MCF 10A (cell line): ENCODE measurements at regions of chr15 and their contacts with region 1.

Region 1: GRCh38 chr15:59247364-59247763 is 40.7 kb downstream of the LDHAL6B start:
- DNase-seq: peak; percentile 77
- H3K4me3 Mint-ChIP-seq: no peak overlapping the region
- H3K27ac Mint-ChIP-seq: no peak overlapping the region
- H3K4me1 Mint-ChIP-seq: peaks cover 5% of the 10 kb centered on the region
- H3K27me3 Mint-ChIP-seq: no peaks in the 10 kb centered on the region
- CTCF ChIP-seq: peak; percentile 57

Region 2: DNA sequence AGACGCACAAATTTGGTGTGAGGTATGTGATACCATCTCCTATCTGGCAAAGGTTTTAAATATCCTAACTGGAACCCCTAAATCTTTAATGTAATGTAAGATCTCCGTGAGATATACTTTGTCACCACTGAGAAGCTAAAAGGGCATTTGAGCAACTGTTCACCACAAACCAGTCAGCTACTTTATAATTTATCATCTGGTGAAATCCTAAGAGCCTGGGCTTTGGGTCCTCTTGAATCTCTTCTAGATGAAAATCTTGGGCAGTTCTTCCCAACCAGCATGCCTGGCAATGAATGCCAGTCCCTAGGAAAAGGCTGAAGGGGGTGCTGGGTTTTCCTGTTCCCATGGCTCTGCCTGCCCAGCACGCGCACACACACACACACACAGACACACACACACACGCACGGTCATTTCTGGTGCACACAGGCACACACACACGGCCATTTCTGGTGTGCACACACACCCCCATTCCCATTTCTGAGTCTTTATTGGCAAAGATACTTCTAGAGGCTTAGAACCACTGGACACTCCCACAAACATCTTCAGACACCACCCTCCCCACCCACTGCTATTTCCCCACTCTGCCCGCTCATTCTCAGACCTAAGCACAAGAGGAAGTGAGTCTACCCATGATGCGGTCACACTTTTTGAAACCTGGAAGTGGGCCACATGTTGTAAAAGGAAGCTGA is 52.7 kb after region 1 on chr15:
- CTCF ChIA-PET with region 1: interaction called, 13 read pairs
- POLR2A ChIA-PET with region 1: no interaction called
- intact Hi-C with region 1: loop called (anchors 5 kb)
- DNase-seq: peak; percentile 99
- H3K4me3 Mint-ChIP-seq: peak overlapping the region; percentile 51
- H3K27ac Mint-ChIP-seq: peak overlapping the region; percentile 69
- H3K4me1 Mint-ChIP-seq: peaks cover 40% of the 10 kb centered on the region
- H3K27me3 Mint-ChIP-seq: no peaks in the 10 kb centered on the region
- CTCF ChIP-seq: no peak